SK-N-SH (cell line): ENCODE measurements at regions of chr9 and their contacts with region 1.

Region 1: GRCh38 chr9:89597711-89598625 is 6.8 kb upstream of the GADD45G start:
- DNase-seq: peak; percentile 65
- H3K4me3 ChIP-seq: peak overlapping the region in 1 of 2 experiments; percentile 35; a peak in 1 of 4 replicates
- H3K27ac ChIP-seq: no peak overlapping the region
- H3K4me1 ChIP-seq: peaks cover 0 to 10% of the 10 kb centered on the region in 2 experiments; a peak in 1 of 4 replicates
- H3K27me3 ChIP-seq: peaks cover 26% of the 10 kb centered on the region; the same call in 1 of the 2 replicates
- CTCF ChIP-seq: peak; percentile 75
- EP300 ChIP-seq: no peak
- RAD21 ChIP-seq: peak; percentile 94

Region 2: DNA sequence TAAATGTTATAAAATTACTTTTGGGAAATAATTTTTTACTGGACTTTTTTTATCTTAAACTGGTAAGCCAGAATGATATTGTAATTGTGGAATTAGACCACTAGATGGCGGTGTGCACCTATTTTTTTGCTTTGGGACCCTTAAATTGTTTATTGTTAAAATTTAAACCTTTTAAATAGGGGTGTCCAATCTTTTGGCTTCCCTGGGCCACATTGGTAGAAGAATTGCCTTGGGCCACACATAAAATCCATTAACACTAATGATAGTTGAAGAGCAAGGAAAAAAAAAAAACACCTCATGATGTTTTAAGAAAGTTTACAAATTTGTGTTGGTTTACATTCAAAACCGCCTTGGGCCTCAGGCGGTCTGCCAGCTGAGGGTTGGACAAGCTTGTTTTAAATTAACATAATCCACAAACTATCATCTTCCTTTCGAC is 21.5 kb before region 1 on chr9:
- CTCF ChIA-PET with region 1: interaction called, 24 read pairs
- POLR2A ChIA-PET with region 1: no interaction called
- DNase-seq: peak; percentile 37
- H3K4me3 ChIP-seq: no peak overlapping the region; a peak in 1 of 4 replicates
- H3K27ac ChIP-seq: no peak overlapping the region
- H3K4me1 ChIP-seq: no peaks in the 10 kb centered on the region
- H3K27me3 ChIP-seq: peaks cover 13% of the 10 kb centered on the region; the same call in 1 of the 2 replicates
- CTCF ChIP-seq: peak; percentile 85
- EP300 ChIP-seq: no peak
- RAD21 ChIP-seq: peak; percentile 74

Region 3: DNA sequence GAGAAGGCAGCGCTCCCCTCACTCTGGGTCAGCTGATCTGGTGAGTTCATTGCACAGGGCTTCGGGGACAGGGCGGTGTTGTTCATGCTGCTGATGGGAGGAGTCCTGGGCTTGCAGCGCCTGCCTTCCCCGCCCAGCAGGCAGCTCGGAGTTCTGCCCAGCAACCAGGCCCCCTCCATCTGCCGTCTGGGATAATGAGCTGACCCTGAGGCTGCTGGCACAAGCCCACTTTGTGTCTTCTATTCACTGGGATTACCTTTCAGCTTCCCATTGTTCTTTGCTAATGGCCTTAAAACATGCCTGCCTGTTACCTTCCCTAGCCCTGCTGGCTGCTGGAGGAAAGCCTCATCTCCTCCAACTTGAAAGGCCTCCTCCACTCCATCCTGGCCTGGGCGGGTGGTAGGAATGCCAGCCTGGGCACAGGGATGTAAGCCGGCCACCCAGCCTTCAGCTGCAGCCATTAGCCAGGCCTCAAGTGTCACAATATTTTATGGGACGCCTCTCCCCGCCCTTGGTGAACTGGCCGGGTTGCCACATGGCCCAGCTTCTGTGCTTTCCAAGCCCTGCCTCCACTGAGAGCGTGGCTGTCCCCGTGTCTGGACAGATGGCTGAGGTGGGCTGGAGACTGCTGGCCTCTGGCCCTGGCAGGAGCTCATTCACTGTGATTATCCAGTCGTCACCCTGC is 77.2 kb after region 1 on chr9:
- CTCF ChIA-PET with region 1: interaction called, 60 read pairs
- POLR2A ChIA-PET with region 1: interaction called, 134 read pairs
- DNase-seq: peak; percentile 89
- H3K4me3 ChIP-seq: no peak overlapping the region; a peak in 1 of 4 replicates
- H3K27ac ChIP-seq: peak overlapping the region in 1 of 2 experiments; percentile 100; a peak in 2 of 4 replicates
- H3K4me1 ChIP-seq: peaks cover 0 to 68% of the 10 kb centered on the region in 2 experiments; a peak in 3 of 4 replicates
- H3K27me3 ChIP-seq: no peaks in the 10 kb centered on the region
- CTCF ChIP-seq: no peak
- EP300 ChIP-seq: peak in 1 of 2 experiments; percentile 91; a peak in 2 of 4 replicates
- RAD21 ChIP-seq: peak; percentile 47

Region 4: DNA sequence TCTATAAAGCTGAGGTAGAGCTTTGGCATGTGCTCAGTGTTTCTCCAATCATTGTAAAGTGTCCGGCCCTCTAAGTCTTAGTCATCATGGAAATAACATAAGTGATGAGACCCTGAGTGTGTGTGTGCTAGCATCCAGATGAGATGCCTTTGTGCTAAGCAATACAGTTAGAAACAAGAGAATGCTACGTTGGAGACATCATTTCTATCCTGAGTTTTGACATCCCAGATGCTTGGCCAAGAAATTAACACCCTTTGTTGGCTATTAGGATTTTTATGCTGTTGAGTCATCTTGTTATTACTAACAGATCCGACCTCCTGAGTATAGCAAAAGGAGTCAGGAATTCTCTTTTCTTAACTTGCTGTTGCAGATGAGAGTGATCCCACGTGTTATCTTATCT is 514.8 kb after region 1 on chr9:
- CTCF ChIA-PET with region 1: interaction called, 604 read pairs
- POLR2A ChIA-PET with region 1: no interaction called
- DNase-seq: no peak
- H3K4me3 ChIP-seq: no peak overlapping the region
- H3K27ac ChIP-seq: no peak overlapping the region
- H3K4me1 ChIP-seq: no peaks in the 10 kb centered on the region
- H3K27me3 ChIP-seq: no peaks in the 10 kb centered on the region
- CTCF ChIP-seq: no peak
- EP300 ChIP-seq: no peak
- RAD21 ChIP-seq: no peak

Region 5: GRCh38 chr9:90121762-90122161 is 523.8 kb after region 1 on chr9:
- CTCF ChIA-PET with region 1: interaction called, 13 read pairs
- POLR2A ChIA-PET with region 1: no interaction called
- DNase-seq: no peak
- H3K4me3 ChIP-seq: no peak overlapping the region
- H3K27ac ChIP-seq: no peak overlapping the region
- H3K4me1 ChIP-seq: peaks cover 0 to 7% of the 10 kb centered on the region in 2 experiments; a peak in 2 of 4 replicates
- H3K27me3 ChIP-seq: no peaks in the 10 kb centered on the region
- CTCF ChIP-seq: no peak
- EP300 ChIP-seq: no peak
- RAD21 ChIP-seq: no peak

Region 6: DNA sequence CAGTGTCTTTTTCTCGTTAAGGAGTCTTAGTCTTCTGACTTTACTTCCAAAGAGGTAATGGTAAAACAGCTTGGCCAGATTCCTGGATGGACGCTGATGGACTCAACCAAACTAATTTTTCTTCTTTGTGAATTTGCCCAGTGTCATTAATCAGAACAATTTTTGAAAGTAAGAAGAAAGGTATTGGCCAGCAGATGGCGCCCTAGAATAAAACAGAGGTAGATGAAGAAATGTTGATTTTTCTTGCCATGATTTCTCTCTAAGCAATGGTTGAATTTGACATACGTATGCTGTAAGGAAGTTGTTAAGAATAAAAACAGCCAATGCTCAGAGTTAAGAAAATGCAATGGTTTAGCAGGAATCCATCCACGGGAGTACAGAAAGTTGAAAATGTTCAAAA is 544.6 kb after region 1 on chr9:
- CTCF ChIA-PET with region 1: interaction called, 22 read pairs
- POLR2A ChIA-PET with region 1: no interaction called
- DNase-seq: peak; percentile 24
- H3K4me3 ChIP-seq: no peak overlapping the region; a peak in 1 of 4 replicates
- H3K27ac ChIP-seq: no peak overlapping the region
- H3K4me1 ChIP-seq: no peaks in the 10 kb centered on the region; a peak in 1 of 4 replicates
- H3K27me3 ChIP-seq: no peaks in the 10 kb centered on the region
- CTCF ChIP-seq: peak; percentile 54
- EP300 ChIP-seq: no peak
- RAD21 ChIP-seq: peak; percentile 61

Region 7: DNA sequence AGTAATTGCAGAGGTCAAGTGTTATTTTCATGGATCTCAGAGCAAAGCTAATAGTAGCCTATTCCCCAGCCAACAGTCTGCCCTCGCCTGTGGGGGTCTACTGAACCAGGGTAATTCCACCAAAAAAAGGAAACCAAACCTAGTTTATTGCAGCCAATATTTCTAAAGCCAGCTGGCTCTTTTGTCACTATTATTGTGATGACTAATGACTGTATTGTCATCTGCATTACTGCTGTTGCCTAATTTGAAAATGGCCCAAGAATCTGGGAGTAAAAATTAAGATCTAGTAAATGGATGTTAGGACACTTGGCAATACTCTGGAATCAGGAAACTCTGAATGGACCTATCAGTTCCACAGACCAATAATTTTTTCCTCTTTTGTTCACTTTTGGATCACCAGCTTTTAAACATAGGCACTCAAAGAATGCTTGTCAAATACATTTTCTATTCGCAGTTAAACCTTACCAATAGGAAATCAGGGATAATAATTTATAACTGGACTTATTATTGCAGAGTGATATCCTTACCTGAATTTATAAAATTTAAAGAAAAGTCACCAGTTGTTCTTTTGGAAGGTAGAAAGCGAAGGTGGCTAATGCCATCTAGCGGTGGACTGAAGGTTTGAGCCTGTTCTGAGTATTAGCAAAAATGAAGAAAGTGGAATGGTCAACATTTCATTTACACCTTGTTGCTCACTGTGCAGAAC is 1272.8 kb after region 1 on chr9:
- CTCF ChIA-PET with region 1: interaction called, 15 read pairs
- POLR2A ChIA-PET with region 1: no interaction called
- DNase-seq: peak; percentile 50
- H3K4me3 ChIP-seq: peak overlapping the region in 1 of 2 experiments; percentile 35; a peak in 1 of 4 replicates
- H3K27ac ChIP-seq: no peak overlapping the region
- H3K4me1 ChIP-seq: no peaks in the 10 kb centered on the region; a peak in 1 of 4 replicates
- H3K27me3 ChIP-seq: no peaks in the 10 kb centered on the region
- CTCF ChIP-seq: peak; percentile 95
- EP300 ChIP-seq: no peak
- RAD21 ChIP-seq: peak; percentile 91